GM18951 (cell line): ENCODE measurements at regions of chr13 and their contacts with region 1.

Region 1: GRCh38 chr13:69524459-69525155 is 583.0 kb upstream of the ATXN8OS start:
- POLR2A ChIP-seq: no peak

Region 2: GRCh38 chr13:69477451-69477850 is 47.2 kb before region 1 on chr13:
- in situ Hi-C with region 1: no loop called
- POLR2A ChIP-seq: no peak

Region 3: DNA sequence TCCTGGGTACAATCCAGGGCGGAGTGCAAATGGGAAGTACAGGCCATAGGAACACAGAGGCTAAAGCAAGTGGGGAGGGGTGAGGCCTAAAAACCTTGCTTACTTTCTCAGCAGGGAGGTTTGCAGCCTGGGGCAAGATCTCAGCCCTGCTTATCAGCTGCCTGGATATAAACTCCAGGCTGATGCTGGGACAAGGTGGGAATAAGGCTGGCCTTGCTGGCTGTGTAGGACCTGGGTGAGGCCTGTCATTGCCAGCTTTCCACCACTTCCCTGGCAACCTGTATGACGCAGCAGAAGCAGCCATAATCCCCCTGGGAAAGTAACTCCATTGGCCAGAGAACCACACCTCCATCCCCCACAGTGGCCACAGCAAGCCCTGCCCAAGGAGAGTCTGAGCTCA is 303.9 kb after region 1 on chr13:
- in situ Hi-C with region 1: loop called (anchors 25 kb)
- POLR2A ChIP-seq: no peak

Region 4: GRCh38 chr13:70568571-70568970 is 1044.0 kb after region 1 on chr13:
- in situ Hi-C with region 1: loop called (anchors 25 kb)
- POLR2A ChIP-seq: no peak